PC-9 (cell line): ENCODE measurements at regions of chr19 and their contacts with region 1.

Region 1: GRCh38 chr19:33521480-33522370 is at the start of gene PEPD:
- DNase-seq: peak; percentile 60 to 84
- H3K4me3 ChIP-seq: peak within 1 kb of the TSS; percentile 98
- H3K27ac ChIP-seq: no peak within 1 kb of the TSS
- H3K4me1 ChIP-seq: peaks cover 12% of the 10 kb centered on the region
- H3K27me3 ChIP-seq: peaks cover 18% of the 10 kb centered on the region; the same call in 1 of the 2 replicates
- CTCF ChIP-seq: no peak
- total RNA-seq, gene PEPD: 64.9 and 71.0 TPM in 2 replicates

Region 2: DNA sequence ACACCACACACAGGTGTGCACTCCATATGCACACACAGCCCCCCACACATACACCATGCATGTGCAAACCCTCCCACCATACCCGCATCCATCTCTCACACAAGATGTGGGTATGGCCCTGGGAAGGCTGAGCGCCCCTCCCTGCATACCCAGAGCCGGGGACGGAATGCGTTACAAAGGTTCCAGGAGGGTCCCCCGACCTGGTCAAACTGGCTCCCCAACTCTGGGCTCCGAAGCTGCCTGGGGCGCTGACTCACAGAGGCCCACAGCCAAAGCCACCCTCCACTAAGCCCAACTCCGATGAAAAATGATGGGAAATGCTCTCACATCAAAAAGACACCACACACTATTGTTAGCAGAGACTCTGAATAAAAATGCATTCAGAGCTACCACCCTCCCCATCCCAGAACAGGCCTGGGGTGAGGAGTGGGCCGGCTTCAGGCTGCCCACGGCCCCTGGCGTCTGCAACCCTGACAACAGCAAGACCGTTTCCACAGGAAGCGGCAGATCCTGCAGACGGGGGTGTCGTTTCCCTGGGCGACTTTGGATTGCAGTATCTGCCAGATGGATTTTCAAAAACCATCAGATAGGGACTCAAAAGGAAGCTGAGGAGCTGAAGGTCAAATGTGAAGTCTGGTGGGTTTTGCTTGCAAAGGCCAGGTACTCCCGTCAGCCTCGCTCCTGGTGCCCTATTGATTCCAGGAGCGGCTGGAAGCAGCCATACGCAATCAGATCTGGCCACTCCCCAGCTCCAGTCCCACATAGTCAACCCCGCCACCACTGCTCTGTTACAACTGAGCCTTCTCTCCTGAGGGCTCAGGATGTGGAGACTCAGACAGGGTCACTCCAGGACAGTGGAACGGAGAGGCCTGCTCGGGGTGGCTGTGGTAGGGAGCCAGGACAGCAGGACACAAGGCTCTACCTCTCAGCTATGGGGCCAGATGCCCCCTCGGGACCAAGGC is 14.4 kb before region 1 on chr19:
- CTCF ChIA-PET with region 1: interaction called, 6 read pairs
- POLR2A ChIA-PET with region 1: interaction called, 8 read pairs
- intact Hi-C with region 1: loop called (anchors 1 kb)
- DNase-seq: peak; percentile 84 to 90
- H3K4me3 ChIP-seq: peak overlapping the region; percentile 52; the same call in 1 of the 2 replicates
- H3K27ac ChIP-seq: peak overlapping the region; percentile 78
- H3K4me1 ChIP-seq: peaks cover 55% of the 10 kb centered on the region
- H3K27me3 ChIP-seq: no peaks in the 10 kb centered on the region
- CTCF ChIP-seq: no peak